Calu3 (cell line): ENCODE measurements at regions of chr1 and their contacts with region 1.

Region 1: GRCh38 chr1:6270401-6270800 is 9.5 kb upstream of the GPR153 start:
- DNase-seq: no peak
- H3K4me3 Mint-ChIP-seq: no peak overlapping the region
- H3K27ac Mint-ChIP-seq: no peak overlapping the region
- H3K4me1 Mint-ChIP-seq: no peaks in the 10 kb centered on the region
- H3K27me3 Mint-ChIP-seq: no peaks in the 10 kb centered on the region
- CTCF ChIP-seq: no peak

Region 2: DNA sequence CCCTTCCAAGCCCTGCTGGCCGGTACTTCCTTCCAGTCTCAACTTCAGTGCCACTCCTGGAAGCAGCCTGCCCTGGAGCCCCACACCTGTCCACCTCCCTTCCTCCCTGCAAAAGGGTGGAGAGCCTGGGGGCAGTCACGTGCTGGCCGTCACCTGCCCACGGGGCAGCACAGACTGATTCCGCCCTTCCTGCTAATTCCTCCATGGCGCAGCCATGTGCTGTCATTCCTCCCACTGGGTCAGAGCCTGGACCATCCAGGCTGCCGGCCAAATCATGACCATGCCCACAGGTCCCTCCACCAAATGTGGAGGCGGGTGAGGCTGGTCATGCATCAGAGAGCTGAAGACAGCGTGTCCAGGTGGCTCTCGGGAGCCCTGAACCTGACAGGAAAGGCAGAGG is 14.9 kb after region 1 on chr1:
- CTCF ChIA-PET with region 1: interaction called, 10 read pairs
- intact Hi-C with region 1: no loop called
- DNase-seq: no peak
- H3K4me3 Mint-ChIP-seq: no peak overlapping the region
- H3K27ac Mint-ChIP-seq: no peak overlapping the region
- H3K4me1 Mint-ChIP-seq: no peaks in the 10 kb centered on the region
- H3K27me3 Mint-ChIP-seq: no peaks in the 10 kb centered on the region
- CTCF ChIP-seq: no peak